CD4-positive, alpha-beta T cell (primary cell): ENCODE measurements at regions of chr1 and their contacts with region 1.

Region 1: GRCh38 chr1:112619520-112620376 is at the start of gene CAPZA1:
- DNase-seq: peak; percentile 80 to 96 (median 88)
- ATAC-seq: peak; percentile 67
- H3K4me3 ChIP-seq: peak within 1 kb of the TSS; percentile 69
- H3K4me3 Mint-ChIP-seq: peak within 1 kb of the TSS; percentile 100
- H3K27ac ChIP-seq: peak within 1 kb of the TSS; percentile 98 to 100
- H3K27ac Mint-ChIP-seq: peak within 1 kb of the TSS; percentile 95
- H3K4me1 ChIP-seq: peaks cover 38% of the 10 kb centered on the region
- H3K4me1 Mint-ChIP-seq: peaks cover 54% of the 10 kb centered on the region
- H3K27me3 ChIP-seq: no peaks in the 10 kb centered on the region
- H3K27me3 Mint-ChIP-seq: no peaks in the 10 kb centered on the region
- CTCF ChIP-seq: no peak
- total RNA-seq, gene CAPZA1: 166 to 179 TPM

Region 2: GRCh38 chr1:112575154-112575804 is 44.5 kb before region 1 on chr1:
- CTCF ChIA-PET with region 1: no interaction called
- POLR2A ChIA-PET with region 1: no interaction called
- intact Hi-C with region 1: no loop called
- DNase-seq: no peak
- ATAC-seq: no peak
- H3K4me3 ChIP-seq: no peak overlapping the region
- H3K4me3 Mint-ChIP-seq: no peak overlapping the region
- H3K27ac ChIP-seq: no peak overlapping the region
- H3K27ac Mint-ChIP-seq: no peak overlapping the region
- H3K4me1 ChIP-seq: no peaks in the 10 kb centered on the region
- H3K4me1 Mint-ChIP-seq: no peaks in the 10 kb centered on the region
- H3K27me3 ChIP-seq: no peaks in the 10 kb centered on the region
- H3K27me3 Mint-ChIP-seq: no peaks in the 10 kb centered on the region
- CTCF ChIP-seq: no peak

Region 3: DNA sequence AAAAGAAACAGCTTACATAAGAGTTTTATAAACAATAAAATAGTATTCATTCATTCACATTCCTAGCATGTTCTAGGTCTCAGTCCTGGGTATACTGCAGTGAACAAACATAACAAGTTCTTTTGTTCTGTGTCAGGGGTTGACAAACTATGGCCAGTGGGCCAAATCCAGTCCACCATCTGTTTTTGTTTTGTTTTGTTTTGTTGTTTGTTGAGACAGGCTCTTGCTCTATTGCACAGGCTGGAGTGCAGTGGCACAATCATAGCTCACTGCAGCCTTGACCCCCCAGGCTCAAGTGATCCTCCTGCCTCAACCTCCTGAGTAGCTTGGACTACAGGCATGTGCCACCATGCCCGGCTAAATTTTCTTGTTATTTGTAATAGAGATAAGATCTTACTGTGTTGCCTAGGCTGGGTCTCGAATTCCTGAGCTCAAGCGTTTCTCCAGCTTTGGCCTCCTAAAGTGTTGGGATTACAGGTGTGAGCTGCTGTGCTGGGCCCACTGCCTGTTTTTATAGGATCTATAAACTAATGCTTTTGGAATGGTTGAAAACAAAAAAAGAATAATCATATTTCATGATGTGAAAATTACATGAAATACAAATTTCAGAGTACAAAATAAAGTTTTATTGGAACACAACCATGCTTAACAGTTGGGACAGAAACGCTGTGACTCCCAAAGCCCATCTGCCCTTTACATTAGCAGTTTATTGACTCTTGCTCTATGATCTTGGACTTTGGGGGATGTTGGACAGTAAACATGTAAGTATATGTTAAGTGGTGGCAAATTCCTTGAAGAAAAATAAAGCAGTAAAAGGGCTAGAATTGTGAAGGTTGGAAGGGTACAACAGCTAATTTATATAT is 17.7 kb after region 1 on chr1:
- CTCF ChIA-PET with region 1: no interaction called
- POLR2A ChIA-PET with region 1: interaction called, 11 read pairs
- intact Hi-C with region 1: no loop called
- DNase-seq: no peak
- ATAC-seq: no peak
- H3K4me3 ChIP-seq: no peak overlapping the region
- H3K4me3 Mint-ChIP-seq: peak overlapping the region; percentile 21
- H3K27ac ChIP-seq: no peak overlapping the region
- H3K27ac Mint-ChIP-seq: peak overlapping the region; percentile 78
- H3K4me1 ChIP-seq: peaks cover 17% of the 10 kb centered on the region
- H3K4me1 Mint-ChIP-seq: peaks cover 66% of the 10 kb centered on the region
- H3K27me3 ChIP-seq: no peaks in the 10 kb centered on the region
- H3K27me3 Mint-ChIP-seq: no peaks in the 10 kb centered on the region
- CTCF ChIP-seq: no peak

Region 4: GRCh38 chr1:112706908-112707663 is 87.3 kb after region 1 on chr1 and contains the start of gene RHOC:
- CTCF ChIA-PET with region 1: interaction called, 3 read pairs
- POLR2A ChIA-PET with region 1: interaction called, 14 read pairs
- intact Hi-C with region 1: loop called in 1 of 2 experiments (anchors 2 kb)
- DNase-seq: peak in 13 of 14 experiments; percentile 23 to 82 (median 53)
- ATAC-seq: peak; percentile 57
- H3K4me3 ChIP-seq: peak within 1 kb of the TSS; percentile 60
- H3K4me3 Mint-ChIP-seq: peak within 1 kb of the TSS; percentile 80
- H3K27ac ChIP-seq: peak within 1 kb of the TSS in 1 of 2 donors; percentile 60
- H3K27ac Mint-ChIP-seq: peak within 1 kb of the TSS; percentile 59
- H3K4me1 ChIP-seq: peaks cover 37% of the 10 kb centered on the region
- H3K4me1 Mint-ChIP-seq: peaks cover 50% of the 10 kb centered on the region
- H3K27me3 ChIP-seq: no peaks in the 10 kb centered on the region
- H3K27me3 Mint-ChIP-seq: no peaks in the 10 kb centered on the region
- CTCF ChIP-seq: peak; percentile 79
- total RNA-seq, gene RHOC: 11.9 to 12.7 TPM

Region 5: DNA sequence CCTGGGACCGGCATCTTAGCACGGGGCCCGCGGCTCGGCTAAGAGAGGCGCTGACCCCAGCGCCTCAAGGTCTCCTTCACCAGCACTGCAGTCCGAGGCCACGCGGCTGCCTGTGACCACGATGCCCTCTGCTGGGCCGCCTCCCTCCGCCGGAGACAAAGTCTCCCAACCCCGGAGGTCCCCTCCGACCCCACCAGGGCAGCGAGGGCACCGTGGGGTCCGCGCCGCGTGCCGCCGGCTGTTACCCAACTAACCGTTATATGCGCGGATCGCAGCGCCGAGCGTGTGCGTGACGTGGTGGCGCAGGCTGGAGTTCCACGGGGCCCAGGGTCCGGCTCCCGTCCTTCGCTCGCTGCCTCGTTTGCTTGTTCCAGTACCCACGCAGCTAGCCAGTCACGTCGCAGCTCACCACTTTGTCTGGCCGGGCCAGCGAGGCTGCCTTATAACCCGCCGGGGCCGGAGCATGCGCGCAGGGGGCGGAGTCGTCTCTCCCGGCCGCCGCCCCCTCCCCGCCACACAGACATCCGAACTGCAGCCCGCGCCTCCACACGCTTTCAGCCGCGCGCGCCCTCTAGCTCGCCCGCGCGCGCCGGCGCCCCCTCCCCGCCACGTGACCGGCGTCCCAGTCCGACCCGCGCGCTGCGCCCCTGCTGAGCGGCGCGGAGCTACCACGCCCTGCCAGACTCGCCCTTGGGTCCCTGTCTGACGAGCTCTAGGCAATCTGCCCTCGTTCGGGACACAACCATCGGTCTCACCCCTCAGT is 336.2 kb after region 1 on chr1 and contains the start of gene SLC16A1:
- CTCF ChIA-PET with region 1: no interaction called
- POLR2A ChIA-PET with region 1: interaction called, 4 read pairs
- intact Hi-C with region 1: loop called (anchors 5 to 10 kb)
- DNase-seq: peak; percentile 78 to 95 (median 86)
- ATAC-seq: peak; percentile 74
- H3K4me3 ChIP-seq: peak within 1 kb of the TSS; percentile 86
- H3K4me3 Mint-ChIP-seq: peak within 1 kb of the TSS; percentile 98
- H3K27ac ChIP-seq: peak within 1 kb of the TSS; percentile 80 to 84
- H3K27ac Mint-ChIP-seq: peak within 1 kb of the TSS; percentile 76
- H3K4me1 ChIP-seq: peaks cover 35% of the 10 kb centered on the region
- H3K4me1 Mint-ChIP-seq: peaks cover 61% of the 10 kb centered on the region
- H3K27me3 ChIP-seq: no peaks in the 10 kb centered on the region
- H3K27me3 Mint-ChIP-seq: no peaks in the 10 kb centered on the region
- CTCF ChIP-seq: peak; percentile 14
- total RNA-seq, gene SLC16A1: 22.9 to 26.6 TPM